ENCODE measurements at regions of chr17 and their contacts with region 1.

Region 1: DNA sequence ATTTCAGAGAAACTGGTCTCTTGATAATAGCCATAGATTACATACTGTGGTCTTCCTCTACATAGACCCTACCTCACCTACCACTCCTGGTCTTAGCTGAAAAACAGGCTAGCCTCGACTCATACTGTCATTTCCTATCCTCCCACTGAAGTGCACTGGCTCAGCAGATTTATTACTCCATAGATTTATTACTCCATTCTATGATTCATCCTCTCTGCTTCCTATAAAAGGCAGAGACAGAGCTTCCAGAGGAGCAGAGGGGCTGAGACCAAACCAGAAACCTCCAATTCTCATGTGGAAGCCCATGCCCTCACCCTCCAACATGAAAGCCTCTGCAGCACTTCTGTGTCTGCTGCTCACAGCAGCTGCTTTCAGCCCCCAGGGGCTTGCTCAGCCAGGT is at the start of gene CCL7:
- ATAC-seq: peak in 7 of 8 experiments; percentile 25 to 71 (median 50)
- H3K4me3 ChIP-seq: no peak within 1 kb of the TSS
- H3K27ac ChIP-seq: no peak within 1 kb of the TSS
- H3K4me1 ChIP-seq: no peaks in the 10 kb centered on the region
- total RNA-seq, gene CCL7: not detected

Region 2: GRCh38 chr17:33874617-33875060 is 395.3 kb before region 1 on chr17:
- in situ Hi-C with region 1: no loop called
- ATAC-seq: peak in 1 of 8 experiments; percentile 8
- H3K4me3 ChIP-seq: no peak overlapping the region
- H3K27ac ChIP-seq: no peak overlapping the region
- H3K4me1 ChIP-seq: peaks cover 0 to 3% of the 10 kb centered on the region in 2 donors

Region 3: DNA sequence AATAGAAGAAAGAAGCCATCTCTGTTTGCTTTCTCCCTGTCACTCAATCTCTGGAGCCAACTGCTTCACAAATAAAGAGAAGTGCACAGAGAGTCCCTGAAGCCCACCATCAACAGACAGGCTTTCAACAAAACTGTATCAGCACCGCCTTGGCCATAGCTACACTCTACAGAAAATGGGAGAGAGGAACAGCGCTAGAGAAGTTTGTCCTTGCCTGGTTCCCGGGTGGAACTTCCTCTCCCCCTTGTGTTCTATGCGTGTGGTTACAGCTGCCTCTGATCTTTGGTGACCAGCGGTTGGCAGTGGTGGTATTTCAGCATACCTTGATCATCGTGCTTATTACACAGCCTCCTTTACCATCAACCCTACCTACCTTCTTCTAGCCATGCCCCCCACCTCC is 106.3 kb before region 1 on chr17:
- in situ Hi-C with region 1: no loop called
- ATAC-seq: peak in 6 of 8 experiments; percentile 8 to 61 (median 37)
- H3K4me3 ChIP-seq: no peak overlapping the region
- H3K27ac ChIP-seq: no peak overlapping the region
- H3K4me1 ChIP-seq: peaks cover 0 to 3% of the 10 kb centered on the region in 2 donors

Region 4: DNA sequence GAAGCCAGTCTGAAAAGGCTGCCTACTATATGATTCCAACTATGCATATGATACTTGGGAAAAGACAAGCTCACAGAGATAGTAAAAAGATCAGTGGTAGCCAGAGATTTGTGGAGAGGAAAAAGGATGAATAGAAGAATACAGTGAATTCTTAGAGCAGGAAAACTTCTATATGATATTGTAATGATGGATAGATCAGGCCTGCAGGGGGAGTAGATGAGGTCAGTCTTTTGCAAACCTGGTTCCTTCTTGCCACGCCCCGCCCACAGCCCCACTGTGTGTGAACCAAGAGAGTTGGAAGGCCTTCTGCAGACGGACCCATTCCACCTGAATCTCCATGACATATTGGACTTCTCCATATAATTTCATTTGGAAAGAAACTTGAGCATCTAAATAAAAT is 48.5 kb after region 1 on chr17:
- in situ Hi-C with region 1: loop called in 1 of 9 experiments (anchors 10 kb)
- ATAC-seq: peak in 3 of 8 experiments; percentile 19 to 31 (median 20)
- H3K4me3 ChIP-seq: no peak overlapping the region
- H3K27ac ChIP-seq: no peak overlapping the region
- H3K4me1 ChIP-seq: no peaks in the 10 kb centered on the region